HEK293T (cell line): ENCODE measurements at regions of chr12 and their contacts with region 1.

Region 1: GRCh38 chr12:55940065-55940732 is 9.2 kb downstream of the DGKA start:
- DNase-seq: peak; percentile 89

Region 2: GRCh38 chr12:55915482-55915859 is 24.7 kb before region 1 on chr12:
- CTCF ChIA-PET with region 1: no interaction called
- POLR2A ChIA-PET with region 1: no interaction called
- DNase-seq: no peak

Region 3: GRCh38 chr12:55955800-55956508 is 15.8 kb after region 1 on chr12:
- CTCF ChIA-PET with region 1: interaction called, 12 read pairs
- POLR2A ChIA-PET with region 1: interaction called, 3 read pairs
- DNase-seq: no peak